Panc1 (cell line): ENCODE measurements at regions of chr1 and their contacts with region 1.

Region 1: DNA sequence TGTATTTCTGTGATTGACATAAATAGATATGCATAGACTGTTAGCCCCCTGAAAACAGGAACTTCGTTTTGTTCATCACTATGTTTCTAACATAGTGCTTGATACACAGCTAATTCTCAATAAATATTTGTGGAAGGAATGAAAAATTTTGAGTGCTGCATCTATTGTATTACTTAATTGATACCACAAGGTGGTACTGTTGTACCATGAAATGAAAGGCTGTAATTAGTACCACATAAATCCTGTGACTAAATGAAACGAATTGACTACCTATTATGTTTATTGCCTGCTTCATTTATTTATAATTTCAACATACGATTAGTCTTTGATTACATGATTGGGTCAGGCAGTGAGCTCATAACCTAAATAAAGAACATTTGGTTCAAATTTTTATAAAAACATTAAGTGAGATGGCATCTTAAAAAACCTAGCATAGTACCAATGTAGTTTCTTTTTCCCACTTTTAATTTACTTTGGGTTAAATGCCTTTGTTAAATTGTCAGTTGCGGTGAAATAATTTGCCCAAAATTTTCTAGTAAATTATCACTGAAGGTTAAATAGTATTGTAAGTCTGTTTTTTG is 15.0 kb upstream of the TGFB2 start:
- DNase-seq: peak; percentile 22
- ATAC-seq: peak; percentile 62
- H3K4me3 ChIP-seq: no peak overlapping the region
- H3K27ac ChIP-seq: peak overlapping the region; percentile 59; the same call in 1 of the 2 replicates
- H3K4me1 ChIP-seq: no peaks in the 10 kb centered on the region; the same call in 1 of the 2 replicates
- H3K27me3 ChIP-seq: no peaks in the 10 kb centered on the region
- CTCF ChIP-seq: peak; percentile 61; the same call in 1 of the 2 replicates

Region 2: DNA sequence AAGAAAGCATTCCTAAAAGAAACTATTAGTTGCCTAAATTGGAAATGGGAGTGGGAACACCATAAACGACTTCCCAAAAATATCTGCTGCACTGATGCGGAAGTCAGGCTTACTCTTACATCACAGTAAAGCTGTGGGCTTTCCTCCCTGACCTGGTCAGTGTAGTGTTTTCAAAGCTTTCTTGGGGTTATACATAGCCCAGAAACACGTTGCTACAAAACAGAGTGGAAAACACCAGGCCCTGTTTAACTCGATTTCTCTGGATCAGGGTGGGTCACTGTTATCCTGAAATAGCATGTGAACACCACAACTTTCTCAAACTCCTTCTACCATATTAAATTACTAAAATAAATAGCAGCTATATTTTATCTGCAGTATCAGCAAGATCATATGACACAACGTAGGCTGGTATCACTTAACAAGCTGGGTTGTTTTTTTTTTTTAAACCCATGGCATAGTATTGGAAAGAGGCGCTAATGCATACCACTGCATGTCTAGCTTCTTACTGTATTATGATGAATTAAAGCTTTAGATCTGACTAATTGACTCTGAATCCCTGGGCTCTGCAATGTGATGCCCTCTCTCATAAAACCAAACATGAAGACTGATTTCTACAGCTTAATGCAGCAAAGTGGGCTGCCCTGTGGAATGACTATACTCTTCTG is 199.6 kb after region 1 on chr1:
- CTCF ChIA-PET with region 1: no interaction called
- POLR2A ChIA-PET with region 1: interaction called, 12 read pairs
- in situ Hi-C with region 1: no loop called
- intact Hi-C with region 1: no loop called
- DNase-seq: no peak
- ATAC-seq: no peak
- H3K4me3 ChIP-seq: no peak overlapping the region
- H3K27ac ChIP-seq: peak overlapping the region; percentile 54; the same call in 1 of the 2 replicates
- H3K4me1 ChIP-seq: peaks cover 11% of the 10 kb centered on the region; the same call in 1 of the 2 replicates
- H3K27me3 ChIP-seq: no peaks in the 10 kb centered on the region
- CTCF ChIP-seq: no peak

Region 3: GRCh38 chr1:219184337-219184736 is 854.2 kb after region 1 on chr1:
- CTCF ChIA-PET with region 1: no interaction called
- POLR2A ChIA-PET with region 1: no interaction called
- in situ Hi-C with region 1: no loop called
- intact Hi-C with region 1: loop called (anchors 5 kb)
- DNase-seq: no peak
- ATAC-seq: no peak
- H3K4me3 ChIP-seq: no peak overlapping the region
- H3K27ac ChIP-seq: no peak overlapping the region
- H3K4me1 ChIP-seq: peaks cover 6% of the 10 kb centered on the region
- H3K27me3 ChIP-seq: no peaks in the 10 kb centered on the region
- CTCF ChIP-seq: no peak

Region 4: DNA sequence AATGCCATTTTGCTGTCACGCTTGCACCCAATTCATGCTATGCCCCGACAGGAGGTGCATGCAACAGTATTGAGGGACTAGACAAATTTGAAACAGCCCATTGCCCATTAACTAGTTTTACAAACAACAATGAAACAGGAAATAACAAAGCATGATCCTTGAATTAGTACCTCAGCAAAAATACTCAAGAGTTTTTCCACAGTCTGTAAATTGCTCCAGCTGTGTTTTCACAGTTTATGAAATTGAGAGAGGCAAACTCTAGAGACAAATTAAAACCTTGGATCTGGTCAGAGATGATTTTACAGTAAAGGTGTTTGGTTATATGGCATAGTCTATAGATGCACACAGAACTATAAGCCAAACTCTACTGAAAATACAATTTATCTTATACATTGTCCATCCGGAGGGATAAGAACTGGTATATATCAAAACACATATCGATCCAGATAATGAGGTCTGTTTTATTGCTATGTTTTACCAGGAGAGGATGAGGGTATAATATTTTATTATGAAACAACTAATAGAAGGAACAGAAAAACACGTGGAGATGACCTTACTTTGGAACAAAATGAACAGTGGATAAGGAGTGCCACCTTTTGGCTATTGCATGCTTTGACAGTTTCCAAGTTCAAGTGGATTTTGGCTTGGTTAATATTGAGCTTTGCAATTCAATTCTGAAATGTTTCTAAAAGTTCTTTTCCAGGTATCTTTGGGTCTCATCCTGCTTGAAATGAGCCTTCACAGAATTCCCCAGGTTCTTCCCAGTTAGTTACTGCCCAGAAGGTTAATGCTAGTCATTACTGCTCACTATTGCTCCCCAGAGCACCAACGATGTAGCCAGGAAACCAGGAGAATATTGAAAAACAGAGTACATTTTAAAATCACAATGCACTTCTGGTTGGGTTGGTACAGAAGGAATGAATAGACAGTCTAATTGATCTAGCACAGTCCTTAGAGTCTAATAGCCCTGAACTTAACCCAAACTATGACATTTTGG is 1237.1 kb after region 1 on chr1:
- CTCF ChIA-PET with region 1: no interaction called
- POLR2A ChIA-PET with region 1: no interaction called
- in situ Hi-C with region 1: no loop called
- intact Hi-C with region 1: loop called (anchors 5 kb)
- DNase-seq: peak; percentile 30
- ATAC-seq: peak; percentile 70; the same call in 1 of the 2 replicates
- H3K4me3 ChIP-seq: no peak overlapping the region
- H3K27ac ChIP-seq: no peak overlapping the region
- H3K4me1 ChIP-seq: no peaks in the 10 kb centered on the region
- H3K27me3 ChIP-seq: no peaks in the 10 kb centered on the region; the same call in 1 of the 2 replicates
- CTCF ChIP-seq: peak; percentile 71

Region 5: GRCh38 chr1:219812491-219813203 is 1482.5 kb after region 1 on chr1:
- CTCF ChIA-PET with region 1: no interaction called
- POLR2A ChIA-PET with region 1: no interaction called
- in situ Hi-C with region 1: no loop called
- intact Hi-C with region 1: loop called (anchors 5 kb)
- DNase-seq: peak; percentile 57
- ATAC-seq: peak; percentile 93
- H3K4me3 ChIP-seq: no peak overlapping the region
- H3K27ac ChIP-seq: no peak overlapping the region
- H3K4me1 ChIP-seq: no peaks in the 10 kb centered on the region
- H3K27me3 ChIP-seq: peaks cover 39% of the 10 kb centered on the region
- CTCF ChIP-seq: peak; percentile 85